ENCODE measurements at regions of chr10 and their contacts with region 1.

Region 1: DNA sequence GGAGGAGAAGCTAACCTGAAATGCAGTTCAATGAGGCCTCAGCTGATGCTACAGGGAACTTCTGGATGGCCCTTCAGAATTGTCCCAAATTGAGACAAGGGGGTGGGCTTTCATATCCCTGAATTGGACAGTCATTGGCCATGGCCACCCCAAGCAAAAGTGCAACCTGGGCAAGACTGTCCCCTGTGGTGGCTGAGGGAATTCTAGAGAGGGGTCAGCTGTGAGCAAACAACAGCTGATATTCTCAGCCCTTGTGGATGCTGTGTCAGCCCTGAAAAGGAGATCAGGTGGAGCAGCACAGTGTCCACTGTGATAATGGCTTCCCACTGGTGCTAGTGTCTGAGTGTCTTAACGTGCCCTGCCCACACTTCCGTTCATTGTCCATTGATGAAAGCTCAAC is 76.6 kb downstream of the SLC16A9 start:
- DNase-seq: no peak
- H3K4me3 ChIP-seq: no peak overlapping the region
- H3K27ac ChIP-seq: no peak overlapping the region
- H3K4me1 ChIP-seq: no peaks in the 10 kb centered on the region
- H3K27me3 ChIP-seq: no peaks in the 10 kb centered on the region
- CTCF ChIP-seq: no peak
- EP300 ChIP-seq: no peak
- POLR2A ChIP-seq: no peak

Region 2: DNA sequence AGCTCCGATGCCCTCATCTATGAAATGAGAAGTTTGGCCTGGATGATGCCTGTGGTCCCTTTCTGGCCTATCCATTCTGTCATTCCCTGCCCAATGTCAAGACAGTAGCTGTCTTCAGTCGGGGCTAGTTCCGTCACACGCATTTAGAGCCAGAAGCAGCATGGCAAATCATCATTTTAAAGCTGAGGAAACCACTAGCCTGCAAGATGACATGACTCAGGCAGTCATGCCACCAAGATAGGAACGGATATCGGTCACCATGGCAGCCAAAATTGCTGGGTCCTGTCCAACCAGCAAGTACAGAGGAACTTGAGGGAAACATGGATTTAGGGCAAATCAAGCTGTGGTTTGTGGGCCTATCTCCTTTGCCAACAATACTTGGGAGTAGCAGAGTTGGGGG is 184.7 kb after region 1 on chr10:
- in situ Hi-C with region 1: loop called in 1 of 4 experiments (anchors 10 kb)
- intact Hi-C with region 1: no loop called
- DNase-seq: no peak
- H3K4me3 ChIP-seq: no peak overlapping the region
- H3K27ac ChIP-seq: no peak overlapping the region
- H3K4me1 ChIP-seq: no peaks in the 10 kb centered on the region
- H3K27me3 ChIP-seq: no peaks in the 10 kb centered on the region
- CTCF ChIP-seq: no peak
- EP300 ChIP-seq: no peak
- POLR2A ChIP-seq: no peak

Region 3: GRCh38 chr10:60032723-60033122 is 399.7 kb after region 1 on chr10:
- in situ Hi-C with region 1: loop called (anchors 10 to 25 kb)
- intact Hi-C with region 1: no loop called
- DNase-seq: peak; percentile 60
- H3K4me3 ChIP-seq: no peak overlapping the region
- H3K27ac ChIP-seq: no peak overlapping the region
- H3K4me1 ChIP-seq: peaks cover 0 to 22% (median 8%) of the 10 kb centered on the region in 4 donors
- H3K27me3 ChIP-seq: no peaks in the 10 kb centered on the region
- CTCF ChIP-seq: peak; percentile 21 to 65 (median 47)
- EP300 ChIP-seq: no peak
- POLR2A ChIP-seq: no peak

Region 4: GRCh38 chr10:60525716-60526585 is 892.9 kb after region 1 on chr10:
- in situ Hi-C with region 1: no loop called
- intact Hi-C with region 1: loop called (anchors 5 kb)
- DNase-seq: no peak
- H3K4me3 ChIP-seq: no peak overlapping the region
- H3K27ac ChIP-seq: no peak overlapping the region
- H3K4me1 ChIP-seq: no peaks in the 10 kb centered on the region
- H3K27me3 ChIP-seq: no peaks in the 10 kb centered on the region
- CTCF ChIP-seq: no peak
- EP300 ChIP-seq: no peak
- POLR2A ChIP-seq: no peak